Mammary epithelial cell (primary cell): ENCODE measurements at regions of chr22 and their contacts with region 1.

Region 1: DNA sequence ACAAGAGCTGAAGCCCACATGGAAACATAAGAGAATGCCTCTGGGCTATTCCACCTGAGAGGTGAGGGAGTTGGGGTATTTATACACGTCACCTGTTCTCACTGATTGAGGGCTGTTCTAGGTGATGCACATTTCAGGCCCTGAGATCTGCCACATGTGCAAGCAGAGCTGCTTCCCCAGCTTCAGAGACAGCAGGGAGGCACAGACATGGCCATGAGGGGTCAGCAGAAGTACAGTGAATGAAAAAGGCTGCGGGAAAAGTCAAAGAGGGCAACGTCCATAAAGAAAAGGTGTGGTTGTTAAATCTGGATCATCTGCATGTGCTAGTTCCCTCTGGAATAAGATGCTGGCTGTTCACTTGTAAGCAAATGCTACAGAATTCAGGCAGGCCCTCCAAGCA is 75.4 kb downstream of the GAB4 start:
- DNase-seq: peak; percentile 22
- H3K4me3 ChIP-seq: no peak overlapping the region
- H3K27ac ChIP-seq: no peak overlapping the region
- H3K4me1 ChIP-seq: no peaks in the 10 kb centered on the region
- H3K27me3 ChIP-seq: no peaks in the 10 kb centered on the region
- CTCF ChIP-seq: peak; percentile 39 to 51

Region 2: GRCh38 chr22:16866167-16866566 is 66.4 kb before region 1 on chr22:
- CTCF ChIA-PET with region 1: no interaction called
- dilution Hi-C with region 1: no loop called
- in situ Hi-C with region 1: no loop called
- intact Hi-C with region 1: no loop called
- DNase-seq: no peak
- H3K4me3 ChIP-seq: no peak overlapping the region
- H3K27ac ChIP-seq: no peak overlapping the region
- H3K4me1 ChIP-seq: no peaks in the 10 kb centered on the region
- H3K27me3 ChIP-seq: peaks cover under 1% of the 10 kb centered on the region
- CTCF ChIP-seq: no peak

Region 3: DNA sequence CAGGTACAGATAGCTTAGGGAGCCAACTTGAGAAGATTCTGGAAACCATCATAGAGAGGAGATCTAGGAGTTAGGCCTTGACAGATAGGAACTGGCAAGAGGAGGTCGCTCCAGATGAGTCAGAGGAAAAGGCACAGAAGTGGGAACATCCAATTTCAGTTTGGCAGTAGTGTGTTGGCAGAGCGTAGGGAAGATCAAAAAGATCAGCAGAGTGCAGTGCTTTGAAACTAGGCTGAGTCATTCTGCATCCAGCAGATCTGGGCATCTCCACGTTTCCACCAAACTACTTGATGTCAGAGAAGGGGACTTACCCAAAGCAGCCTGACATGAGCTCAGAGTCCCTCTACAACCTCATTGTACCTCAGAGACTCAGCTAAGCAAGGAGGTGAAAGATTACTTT is 17.0 kb after region 1 on chr22:
- CTCF ChIA-PET with region 1: no interaction called
- dilution Hi-C with region 1: no loop called
- in situ Hi-C with region 1: no loop called
- intact Hi-C with region 1: no loop called
- DNase-seq: no peak
- H3K4me3 ChIP-seq: no peak overlapping the region
- H3K27ac ChIP-seq: no peak overlapping the region
- H3K4me1 ChIP-seq: no peaks in the 10 kb centered on the region
- H3K27me3 ChIP-seq: no peaks in the 10 kb centered on the region
- CTCF ChIP-seq: no peak

Region 4: GRCh38 chr22:16970446-16970845 is 37.9 kb after region 1 on chr22:
- CTCF ChIA-PET with region 1: no interaction called
- dilution Hi-C with region 1: no loop called
- in situ Hi-C with region 1: no loop called
- intact Hi-C with region 1: no loop called
- DNase-seq: no peak
- H3K4me3 ChIP-seq: no peak overlapping the region
- H3K27ac ChIP-seq: no peak overlapping the region
- H3K4me1 ChIP-seq: no peaks in the 10 kb centered on the region
- H3K27me3 ChIP-seq: no peaks in the 10 kb centered on the region
- CTCF ChIP-seq: no peak

Region 5: DNA sequence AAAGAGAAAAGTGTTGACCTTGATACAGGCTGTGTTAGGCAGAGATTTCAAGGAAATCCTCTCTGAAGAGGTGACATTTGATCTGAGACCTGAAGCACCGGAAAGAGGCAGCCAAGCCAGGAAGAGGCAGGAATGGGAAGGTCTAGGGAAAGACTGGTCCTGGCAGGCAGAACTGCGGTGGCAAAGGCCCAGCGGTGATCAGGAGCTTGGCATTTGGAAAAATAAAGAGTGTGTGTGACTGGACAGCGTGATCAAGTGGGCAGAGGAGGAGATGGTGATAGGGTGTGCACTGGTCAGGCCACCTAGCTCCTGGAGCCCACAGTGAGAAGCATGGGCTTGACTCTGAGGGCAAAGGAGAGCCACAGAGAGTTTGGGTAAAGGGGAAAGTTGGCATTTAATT is 102.7 kb after region 1 on chr22:
- CTCF ChIA-PET with region 1: no interaction called
- dilution Hi-C with region 1: no loop called
- in situ Hi-C with region 1: no loop called
- intact Hi-C with region 1: no loop called
- DNase-seq: peak; percentile 58
- H3K4me3 ChIP-seq: no peak overlapping the region
- H3K27ac ChIP-seq: peak overlapping the region; percentile 42
- H3K4me1 ChIP-seq: peaks cover 12% of the 10 kb centered on the region
- H3K27me3 ChIP-seq: no peaks in the 10 kb centered on the region
- CTCF ChIP-seq: no peak

Region 6: DNA sequence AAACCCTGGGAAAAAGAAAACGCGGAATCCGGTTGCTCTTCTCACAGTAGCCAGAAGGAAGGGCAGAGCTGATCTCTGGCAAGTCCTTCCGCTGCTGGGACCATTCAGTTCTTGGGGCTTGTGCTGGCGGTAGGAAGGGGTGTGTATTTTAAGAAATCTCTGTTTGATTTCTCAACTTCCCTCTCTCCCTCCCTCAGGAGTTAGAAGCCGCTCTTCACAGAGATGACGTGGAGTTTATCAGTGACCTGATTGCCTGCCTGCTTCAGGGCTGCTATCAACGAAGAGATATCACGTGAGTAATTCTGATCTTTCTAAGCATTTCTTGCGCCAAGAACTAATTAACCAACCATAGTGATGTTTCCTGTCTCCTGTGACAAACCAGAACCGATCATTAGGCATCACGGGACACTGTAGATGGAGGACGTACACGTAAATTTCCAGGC is 544.8 kb after region 1 on chr22:
- CTCF ChIA-PET with region 1: no interaction called
- dilution Hi-C with region 1: loop called (anchors 25 kb)
- in situ Hi-C with region 1: loop called in 1 of 2 experiments (anchors 25 kb)
- intact Hi-C with region 1: no loop called
- DNase-seq: peak; percentile 14
- H3K4me3 ChIP-seq: peak overlapping the region; percentile 13 to 41 (median 24)
- H3K27ac ChIP-seq: no peak overlapping the region
- H3K4me1 ChIP-seq: no peaks in the 10 kb centered on the region
- H3K27me3 ChIP-seq: no peaks in the 10 kb centered on the region
- CTCF ChIP-seq: no peak

Region 7: DNA sequence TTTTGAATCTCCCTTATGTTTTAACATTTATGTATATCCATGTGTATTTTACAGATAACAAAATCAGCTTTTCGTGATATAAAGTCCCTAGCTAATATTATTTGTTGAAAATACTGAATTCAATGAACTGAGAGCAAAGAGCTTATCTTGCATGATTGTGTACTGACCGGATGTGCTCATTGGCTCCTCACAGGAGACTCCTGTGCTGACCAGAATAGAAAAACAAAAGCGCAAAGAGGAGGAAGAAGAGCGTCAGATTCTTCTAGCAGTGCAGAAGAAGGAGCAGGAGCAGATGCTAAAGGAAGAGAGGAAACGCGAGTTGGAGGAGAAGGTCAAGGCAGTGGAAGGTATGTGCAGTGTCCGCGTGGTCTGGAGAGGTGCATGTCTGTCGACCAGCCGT is 591.3 kb after region 1 on chr22:
- CTCF ChIA-PET with region 1: no interaction called
- dilution Hi-C with region 1: no loop called
- in situ Hi-C with region 1: no loop called
- intact Hi-C with region 1: loop called (anchors 2 kb)
- DNase-seq: no peak
- H3K4me3 ChIP-seq: no peak overlapping the region
- H3K27ac ChIP-seq: no peak overlapping the region
- H3K4me1 ChIP-seq: no peaks in the 10 kb centered on the region
- H3K27me3 ChIP-seq: no peaks in the 10 kb centered on the region
- CTCF ChIP-seq: no peak